Activated CD8-positive, alpha-beta T cell treated with anti-CD3 and anti-CD28 coated beads, Interleukin-2, amount 10 ng/mL, durations not matched to agents 7 days and 5 days (primary cell): ENCODE measurements at regions of chr21 and their contacts with region 1.

Region 1: GRCh38 chr21:29073222-29074006 is at the start of gene CCT8:
- DNase-seq: peak; percentile 99
- ATAC-seq: peak; percentile 91
- H3K4me3 Mint-ChIP-seq: peak within 1 kb of the TSS; percentile 98
- H3K27ac Mint-ChIP-seq: peak within 1 kb of the TSS; percentile 99
- H3K4me1 Mint-ChIP-seq: peaks cover 55% of the 10 kb centered on the region
- H3K27me3 Mint-ChIP-seq: no peaks in the 10 kb centered on the region
- total RNA-seq, gene CCT8: 243 to 246 TPM

Region 2: GRCh38 chr21:28992526-28993292 is 80.7 kb before region 1 on chr21 and contains the start of gene LTN1:
- CTCF ChIA-PET with region 1: interaction called, 3 read pairs
- POLR2A ChIA-PET with region 1: interaction called, 11 read pairs
- DNase-seq: peak; percentile 100
- ATAC-seq: peak; percentile 94
- H3K4me3 Mint-ChIP-seq: peak within 1 kb of the TSS; percentile 84
- H3K27ac Mint-ChIP-seq: peak within 1 kb of the TSS; percentile 98
- H3K4me1 Mint-ChIP-seq: peaks cover 28% of the 10 kb centered on the region
- H3K27me3 Mint-ChIP-seq: no peaks in the 10 kb centered on the region
- total RNA-seq, gene LTN1: 23.5 to 25.9 TPM

Region 3: GRCh38 chr21:29002442-29003144 is 70.8 kb before region 1 on chr21:
- CTCF ChIA-PET with region 1: no interaction called
- POLR2A ChIA-PET with region 1: interaction called, 14 read pairs
- DNase-seq: peak; percentile 97
- ATAC-seq: peak; percentile 100
- H3K4me3 Mint-ChIP-seq: peak overlapping the region; percentile 88
- H3K27ac Mint-ChIP-seq: peak overlapping the region; percentile 96
- H3K4me1 Mint-ChIP-seq: peaks cover 19% of the 10 kb centered on the region
- H3K27me3 Mint-ChIP-seq: no peaks in the 10 kb centered on the region

Region 4: DNA sequence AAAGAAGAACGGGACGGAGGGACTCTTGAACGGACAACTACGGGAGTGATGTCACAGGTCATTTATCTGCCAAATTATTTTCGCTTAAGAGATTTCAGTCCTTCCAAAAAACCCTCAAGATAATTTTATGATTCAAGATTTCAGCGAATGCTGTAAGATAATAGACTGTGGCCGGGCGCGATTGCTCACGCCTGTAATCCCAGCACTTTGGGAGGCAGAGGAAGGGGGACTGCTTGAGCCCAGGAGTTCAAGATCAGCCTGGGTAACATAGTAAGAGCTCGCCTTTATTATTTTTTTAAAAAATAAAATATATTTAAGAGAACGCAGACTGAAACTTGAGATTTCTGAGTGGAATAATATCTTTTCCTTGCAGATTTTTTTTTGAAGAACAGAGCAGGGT is 54.9 kb before region 1 on chr21:
- CTCF ChIA-PET with region 1: interaction called, 3 read pairs
- POLR2A ChIA-PET with region 1: interaction called, 44 read pairs
- DNase-seq: no peak
- ATAC-seq: no peak
- H3K4me3 Mint-ChIP-seq: peak overlapping the region; percentile 79
- H3K27ac Mint-ChIP-seq: peak overlapping the region; percentile 92
- H3K4me1 Mint-ChIP-seq: peaks cover 35% of the 10 kb centered on the region
- H3K27me3 Mint-ChIP-seq: no peaks in the 10 kb centered on the region

Region 5: DNA sequence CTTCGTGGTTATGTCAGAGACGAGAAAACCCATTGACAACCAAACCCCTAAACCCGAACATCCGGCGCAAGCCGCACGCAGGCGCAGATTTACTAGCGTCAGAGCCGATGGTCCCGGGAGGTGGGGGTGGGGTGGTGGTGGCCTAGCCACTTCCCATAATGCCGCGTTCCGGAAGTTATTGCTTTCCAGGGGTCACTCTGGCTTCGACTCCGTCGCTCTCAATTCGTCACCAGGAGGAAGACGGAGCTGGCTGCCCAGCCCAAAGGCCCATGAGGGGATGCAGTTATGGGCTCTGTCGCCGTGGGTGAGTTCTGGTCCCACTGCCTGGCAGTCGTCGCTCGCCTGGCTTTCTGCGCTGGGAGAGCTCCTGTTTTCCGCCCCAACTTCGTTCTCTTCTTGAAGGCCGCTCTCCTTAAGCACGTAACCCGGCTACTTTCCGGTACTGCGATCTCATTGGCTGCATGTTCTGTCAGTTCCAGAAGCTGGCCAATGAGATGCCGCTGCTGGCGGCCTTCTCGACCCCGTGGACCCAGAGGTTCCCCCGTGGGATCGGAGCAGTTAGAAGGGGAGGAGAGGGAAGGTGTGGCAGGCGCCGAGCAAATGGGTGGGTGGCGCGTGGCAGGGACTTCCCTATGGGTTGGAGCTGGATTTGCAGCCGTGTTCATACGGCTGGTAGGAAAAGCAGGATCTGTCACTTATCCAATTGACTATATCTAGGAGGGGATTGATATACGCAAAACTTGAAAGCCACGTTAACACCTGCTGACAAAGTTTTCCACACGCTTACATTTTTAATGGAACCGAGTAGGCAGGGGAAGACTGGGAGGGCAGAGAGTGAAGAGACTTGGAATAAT is 48.7 kb before region 1 on chr21 and contains the start of gene USP16:
- CTCF ChIA-PET with region 1: interaction called, 4 read pairs
- POLR2A ChIA-PET with region 1: interaction called, 44 read pairs
- DNase-seq: peak; percentile 96
- ATAC-seq: peak; percentile 97
- H3K4me3 Mint-ChIP-seq: peak within 1 kb of the TSS; percentile 99
- H3K27ac Mint-ChIP-seq: peak within 1 kb of the TSS; percentile 98
- H3K4me1 Mint-ChIP-seq: peaks cover 47% of the 10 kb centered on the region
- H3K27me3 Mint-ChIP-seq: no peaks in the 10 kb centered on the region
- total RNA-seq, gene USP16: 31.8 to 33.7 TPM

Region 6: GRCh38 chr21:29130270-29130969 is 57.0 kb after region 1 on chr21 and contains the start of gene MAP3K7CL:
- CTCF ChIA-PET with region 1: no interaction called
- POLR2A ChIA-PET with region 1: no interaction called
- DNase-seq: no peak
- ATAC-seq: no peak
- H3K4me3 Mint-ChIP-seq: no peak within 1 kb of the TSS
- H3K27ac Mint-ChIP-seq: no peak within 1 kb of the TSS
- H3K4me1 Mint-ChIP-seq: peaks cover 12% of the 10 kb centered on the region
- H3K27me3 Mint-ChIP-seq: peaks cover 6% of the 10 kb centered on the region
- total RNA-seq, gene MAP3K7CL: 3.4 to 4.4 TPM

Region 7: GRCh38 chr21:29343519-29343918 is 270.1 kb after region 1 on chr21:
- CTCF ChIA-PET with region 1: interaction called, 13 read pairs
- POLR2A ChIA-PET with region 1: no interaction called
- DNase-seq: no peak
- ATAC-seq: no peak
- H3K4me3 Mint-ChIP-seq: no peak overlapping the region
- H3K27ac Mint-ChIP-seq: no peak overlapping the region
- H3K4me1 Mint-ChIP-seq: peaks cover 15% of the 10 kb centered on the region
- H3K27me3 Mint-ChIP-seq: no peaks in the 10 kb centered on the region